ENCODE measurements at regions of chr12 and their contacts with region 1.

Region 1: DNA sequence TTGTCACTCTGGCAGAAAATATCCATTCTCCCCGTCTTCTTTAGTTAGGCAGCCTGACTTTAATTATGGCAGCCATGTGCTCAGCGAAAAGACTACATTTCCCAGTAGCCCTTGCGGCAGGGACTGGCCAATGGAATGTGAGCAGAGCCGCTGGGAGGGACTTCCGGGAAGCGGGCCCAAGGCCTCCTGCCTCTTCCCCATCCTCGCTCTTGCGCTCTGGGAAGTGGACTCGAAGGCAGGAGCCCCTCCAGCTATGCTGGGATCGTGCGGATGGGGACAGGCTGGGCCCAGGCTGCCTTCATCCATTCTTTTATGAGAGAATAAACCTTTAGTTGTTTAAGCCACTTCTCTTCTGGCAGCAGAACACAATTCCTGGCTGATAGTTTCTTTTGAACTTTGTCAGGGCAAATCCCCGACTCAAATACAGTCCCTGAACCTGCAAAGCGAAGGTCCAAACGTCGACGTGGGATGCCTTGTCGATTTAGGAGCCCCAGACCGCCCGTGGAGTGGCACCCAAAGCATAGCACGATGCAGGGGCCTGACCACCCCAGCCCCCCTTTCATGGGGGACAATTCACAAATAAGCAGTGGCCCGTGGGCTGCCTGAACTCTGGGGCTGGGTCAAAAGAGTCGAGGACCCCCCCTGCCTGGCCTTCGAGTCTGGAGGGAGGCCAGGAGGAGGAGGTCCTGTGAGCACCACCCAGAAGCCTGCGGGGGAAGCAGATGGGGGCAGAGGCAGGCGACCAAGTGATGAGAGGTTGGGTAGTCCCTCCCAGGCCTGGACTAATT is 15.6 kb upstream of the LRTM2 start:
- DNase-seq: peak; percentile 89
- H3K4me3 ChIP-seq: no peak overlapping the region
- H3K27ac ChIP-seq: no peak overlapping the region
- H3K27me3 ChIP-seq: no peaks in the 10 kb centered on the region
- CTCF ChIP-seq: no peak

Region 2: GRCh38 chr12:1939801-1940607 is 135.3 kb after region 1 on chr12:
- in situ Hi-C with region 1: loop called (anchors 25 kb)
- DNase-seq: peak; percentile 75
- H3K4me3 ChIP-seq: no peak overlapping the region
- H3K27ac ChIP-seq: no peak overlapping the region
- H3K27me3 ChIP-seq: no peaks in the 10 kb centered on the region
- CTCF ChIP-seq: peak; percentile 93

Measured in brain microvascular endothelial cell (primary cell).